ENCODE measurements at regions of chr1 and their contacts with region 1.

Region 1: DNA sequence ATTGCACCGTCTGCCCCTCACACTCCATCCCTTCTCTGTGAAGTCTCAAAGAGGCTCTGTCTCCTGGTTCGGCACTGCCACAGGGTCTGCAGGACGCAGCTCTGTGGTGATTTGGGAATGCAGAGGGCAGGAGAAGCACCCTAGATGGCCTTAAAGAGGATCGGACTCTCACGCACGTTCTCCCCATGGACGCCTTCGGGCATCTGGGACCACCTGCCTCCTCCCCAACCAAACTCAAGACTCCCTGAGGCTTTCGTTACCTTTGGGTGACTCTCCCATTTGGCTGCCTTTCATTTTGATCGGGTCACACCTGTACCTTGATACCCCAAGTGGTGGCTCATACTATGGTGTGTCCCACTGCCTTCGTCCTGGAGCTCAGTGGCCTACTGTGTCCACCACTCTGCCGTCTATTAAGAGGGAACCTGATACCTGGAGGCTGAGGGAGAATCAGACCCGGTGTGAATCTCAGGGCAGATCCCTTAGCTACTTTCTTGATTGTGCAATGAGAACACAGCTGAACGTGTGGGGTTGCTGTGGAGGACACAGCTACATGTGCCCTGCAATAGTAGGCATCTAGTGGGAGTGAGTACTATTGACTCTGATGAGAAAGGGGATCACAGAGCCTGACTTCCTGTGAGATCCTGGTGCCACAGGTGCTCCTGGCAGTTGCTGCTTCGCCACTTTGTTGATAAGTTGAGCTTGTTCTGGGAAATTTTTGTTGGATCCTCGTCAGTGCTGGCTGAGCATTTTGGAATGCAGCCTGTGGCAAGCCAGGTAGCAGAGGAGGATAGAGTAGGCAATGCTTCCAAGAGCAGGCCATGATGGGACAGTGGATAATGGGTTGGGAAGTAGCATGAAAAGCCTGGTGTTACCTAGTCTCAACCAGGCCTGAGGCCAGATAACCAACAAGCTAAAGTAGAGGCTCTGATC is 28.4 kb upstream of the MPZL1 start:
- DNase-seq: no peak
- ATAC-seq: no peak
- H3K4me3 ChIP-seq: no peak overlapping the region
- H3K27ac ChIP-seq: peak overlapping the region in 1 of 12 donors; percentile 15
- H3K4me1 ChIP-seq: peaks cover 6 to 39% (median 19%) of the 10 kb centered on the region in 12 donors
- H3K27me3 ChIP-seq: no peaks in the 10 kb centered on the region
- CTCF ChIP-seq: no peak
- POLR2A ChIP-seq: no peak

Region 2: DNA sequence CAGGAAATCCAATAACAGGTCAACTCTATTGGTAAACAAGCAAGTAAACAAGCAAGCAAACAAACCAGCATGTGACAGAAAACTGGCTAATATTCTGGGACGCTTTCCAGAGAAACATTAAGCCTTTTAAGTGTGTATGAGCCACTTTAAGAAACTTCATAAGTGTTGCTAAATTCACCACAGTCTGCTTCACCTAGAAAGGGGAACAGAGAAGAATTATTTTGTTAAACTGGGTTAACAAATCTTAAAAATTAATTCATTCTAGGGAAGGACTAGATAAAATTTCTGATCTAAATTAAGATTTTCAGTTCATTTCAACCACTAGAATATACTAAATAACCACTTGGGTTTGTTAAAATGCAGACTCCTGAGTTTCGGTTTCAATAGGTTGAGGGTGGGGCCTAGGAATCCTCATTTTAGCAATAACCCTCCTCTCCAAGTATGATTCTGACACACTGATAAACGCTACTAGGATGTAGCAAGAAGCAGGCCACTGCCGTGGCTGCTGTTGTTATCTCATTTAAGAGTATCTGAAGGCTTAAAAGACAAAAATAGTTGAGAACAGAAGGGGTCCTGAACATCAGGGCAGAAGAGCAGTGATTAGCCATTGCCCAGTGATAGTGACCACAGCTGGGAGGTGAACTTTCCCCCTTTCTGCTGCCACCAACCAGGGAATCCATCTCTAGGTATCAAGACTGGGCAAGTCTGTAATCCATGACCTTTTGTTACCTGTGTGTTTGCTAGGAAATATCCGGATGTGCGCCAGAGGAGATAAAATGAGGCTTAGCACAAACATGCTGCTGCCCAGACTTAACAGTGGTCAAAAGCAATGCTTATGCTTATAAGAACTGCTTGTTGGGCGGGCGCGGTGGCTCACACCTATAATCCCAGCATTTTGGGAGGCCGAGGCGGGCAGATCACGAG is 151.0 kb before region 1 on chr1:
- intact Hi-C with region 1: no loop called
- DNase-seq: no peak
- ATAC-seq: no peak
- H3K4me3 ChIP-seq: no peak overlapping the region
- H3K27ac ChIP-seq: peak overlapping the region in 1 of 12 donors; percentile 70
- H3K4me1 ChIP-seq: peaks cover 0 to 69% (median 0%) of the 10 kb centered on the region in 12 donors
- H3K27me3 ChIP-seq: no peaks in the 10 kb centered on the region
- CTCF ChIP-seq: no peak
- POLR2A ChIP-seq: no peak

Region 3: DNA sequence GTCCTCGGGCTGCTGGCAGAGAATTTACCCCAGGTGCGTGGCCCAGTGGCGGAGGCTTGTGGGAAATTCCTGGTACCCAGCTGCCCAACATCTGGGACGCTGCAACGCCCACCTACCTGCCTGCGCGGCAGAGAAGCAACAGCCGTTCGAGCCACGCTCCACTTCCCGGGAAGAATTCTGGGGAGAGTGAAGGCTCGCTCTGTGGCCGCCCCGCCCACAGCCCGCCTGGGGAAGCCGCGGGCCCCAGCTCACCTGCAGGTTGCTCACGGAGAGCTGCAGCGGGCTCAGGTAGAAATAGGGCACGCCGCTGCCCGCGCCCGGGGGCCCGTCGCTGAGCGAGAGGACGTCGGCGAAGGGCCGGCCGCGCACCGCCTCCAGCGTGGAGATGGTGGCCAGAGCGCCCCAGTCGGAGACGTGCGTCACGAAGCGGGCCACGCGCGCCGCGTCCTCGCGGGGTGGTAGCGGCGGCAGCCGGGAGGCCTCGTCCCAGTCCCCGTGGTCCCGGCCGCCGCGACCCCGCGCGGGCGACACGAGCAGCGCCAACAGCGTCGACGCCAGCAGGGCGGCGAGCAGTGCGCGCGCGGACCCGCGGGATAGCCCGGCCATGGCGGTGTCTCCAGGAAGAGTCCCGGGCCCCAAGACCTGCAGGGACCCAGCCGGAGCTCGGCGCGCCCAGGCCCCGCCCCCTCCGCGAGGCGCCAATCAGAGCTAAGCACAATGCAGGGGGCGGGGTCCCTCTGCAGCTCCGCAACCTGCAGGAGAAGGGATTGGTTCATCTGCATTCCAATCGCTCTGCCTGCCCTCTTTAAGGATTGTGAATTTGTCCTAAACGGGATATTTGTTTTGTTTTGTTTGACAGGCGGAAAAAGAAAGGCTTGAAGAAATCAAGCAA is 140.0 kb before region 1 on chr1 and contains the start of gene CREG1:
- intact Hi-C with region 1: loop called in 4 of 10 experiments (anchors 5 kb)
- DNase-seq: peak; percentile 95 to 98 (median 96)
- ATAC-seq: peak; percentile 99 to 100 (median 100)
- H3K4me3 ChIP-seq: peak within 1 kb of the TSS; percentile 60 to 99 (median 84)
- H3K27ac ChIP-seq: peak within 1 kb of the TSS in 11 of 12 donors; percentile 69 to 90 (median 82)
- H3K4me1 ChIP-seq: peaks cover 0 to 53% (median 18%) of the 10 kb centered on the region in 12 donors
- H3K27me3 ChIP-seq: no peaks in the 10 kb centered on the region
- CTCF ChIP-seq: peak in 2 of 12 donors; percentile 11 to 15
- POLR2A ChIP-seq: peak; percentile 53 to 98
- total RNA-seq, gene CREG1: 64.1 to 176 (median 91.1) TPM

Region 4: DNA sequence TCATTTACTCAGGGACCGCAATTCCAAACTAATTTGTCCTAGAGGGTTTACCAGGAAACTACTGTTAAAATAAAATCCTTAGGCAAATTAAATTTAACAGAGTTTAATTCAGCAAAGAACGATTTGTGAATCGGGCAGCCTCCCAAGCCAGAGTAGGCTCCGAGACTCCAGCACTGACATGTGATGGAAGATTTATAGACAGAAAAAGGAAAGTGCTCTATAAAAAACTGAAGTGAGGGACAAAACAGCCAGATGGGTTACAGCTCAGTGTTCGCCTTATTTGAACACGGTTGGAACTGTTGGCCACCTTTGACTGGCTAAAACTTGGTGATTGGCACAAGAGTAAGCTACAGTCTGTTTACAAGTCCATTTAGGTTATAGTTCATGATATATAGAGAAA is 98.6 kb before region 1 on chr1:
- intact Hi-C with region 1: loop called in 8 of 10 experiments (anchors 1 kb)
- DNase-seq: no peak
- ATAC-seq: no peak
- H3K4me3 ChIP-seq: no peak overlapping the region
- H3K27ac ChIP-seq: no peak overlapping the region
- H3K4me1 ChIP-seq: peaks cover 0 to 3% (median 1%) of the 10 kb centered on the region in 12 donors
- H3K27me3 ChIP-seq: no peaks in the 10 kb centered on the region
- CTCF ChIP-seq: no peak
- POLR2A ChIP-seq: no peak